GM12878 (cell line): ENCODE measurements at regions of chr13 and their contacts with region 1.

Region 1: GRCh38 chr13:40922437-40923040 is 96.6 kb downstream of the ELF1 start:
- DNase-seq: no peak
- ATAC-seq: no peak
- H3K4me3 ChIP-seq: no peak overlapping the region
- H3K27ac ChIP-seq: no peak overlapping the region
- H3K4me1 ChIP-seq: no peaks in the 10 kb centered on the region
- H3K27me3 ChIP-seq: no peaks in the 10 kb centered on the region
- CTCF ChIP-seq: no peak
- EP300 ChIP-seq: no peak
- POLR2A ChIP-seq: no peak
- RAD21 ChIP-seq: no peak

Region 2: GRCh38 chr13:40336228-40337221 is 586.0 kb before region 1 on chr13:
- CTCF ChIA-PET with region 1: no interaction called
- POLR2A ChIA-PET with region 1: no interaction called
- RAD21 ChIA-PET with region 1: no interaction called
- SMC1A ChIA-PET with region 1: no interaction called
- in situ Hi-C with region 1: no loop called
- intact Hi-C with region 1: no loop called
- DNase-seq: no peak
- ATAC-seq: no peak
- H3K4me3 ChIP-seq: no peak overlapping the region
- H3K27ac ChIP-seq: no peak overlapping the region
- H3K4me1 ChIP-seq: no peaks in the 10 kb centered on the region
- H3K27me3 ChIP-seq: no peaks in the 10 kb centered on the region
- CTCF ChIP-seq: no peak
- EP300 ChIP-seq: no peak
- POLR2A ChIP-seq: no peak
- RAD21 ChIP-seq: no peak

Region 3: DNA sequence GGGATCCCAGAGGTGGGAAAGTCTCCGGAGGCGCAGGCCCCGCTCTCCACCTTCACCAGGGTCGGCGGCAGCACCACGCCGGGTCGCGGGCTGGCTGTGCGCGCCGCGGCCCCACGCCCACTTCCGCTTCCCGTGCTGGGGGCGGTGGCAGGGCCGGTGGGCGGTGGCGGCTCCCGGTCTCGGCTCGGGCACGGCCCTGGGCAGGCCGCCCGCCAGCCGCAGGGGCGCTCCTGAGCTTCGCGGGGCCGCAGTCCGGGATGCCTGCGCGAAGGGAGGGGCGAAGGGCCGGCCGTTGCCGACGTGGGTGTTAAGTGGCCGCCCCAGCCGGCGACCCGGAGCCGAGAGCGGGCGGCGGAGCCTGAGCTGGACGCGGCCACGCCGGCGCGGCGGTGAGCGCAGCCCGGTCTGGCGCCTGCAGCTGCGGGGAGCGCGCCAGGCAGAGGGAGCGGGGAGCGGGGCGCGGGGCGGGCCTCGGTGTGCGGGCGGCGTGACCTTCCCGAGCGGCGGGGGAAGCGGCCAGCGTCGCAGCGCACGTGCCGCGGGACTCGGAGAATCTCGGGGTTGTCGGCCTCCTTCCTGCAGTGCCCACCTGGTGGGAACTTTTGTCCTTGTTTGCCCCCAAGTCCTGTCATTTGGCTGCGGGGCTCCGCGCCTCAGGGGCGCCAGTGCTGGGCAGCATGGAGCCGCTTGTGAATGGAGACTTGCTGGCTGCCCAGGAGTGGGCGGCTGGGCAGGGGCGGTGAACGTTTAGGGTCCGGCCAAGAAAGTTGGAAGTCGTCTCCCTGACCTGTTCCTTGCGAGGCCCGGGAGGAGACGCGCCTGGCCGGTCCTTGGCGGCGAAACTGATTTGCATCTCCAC is 133.0 kb before region 1 on chr13 and contains the start of gene SLC25A15:
- CTCF ChIA-PET with region 1: interaction called, 4 read pairs
- POLR2A ChIA-PET with region 1: no interaction called
- RAD21 ChIA-PET with region 1: interaction called, 4 read pairs
- SMC1A ChIA-PET with region 1: interaction called, 3 read pairs
- in situ Hi-C with region 1: no loop called
- intact Hi-C with region 1: loop called (anchors 5 kb)
- DNase-seq: no peak
- ATAC-seq: peak; percentile 94
- H3K4me3 ChIP-seq: peak within 1 kb of the TSS; percentile 83
- H3K27ac ChIP-seq: peak within 1 kb of the TSS; percentile 56
- H3K4me1 ChIP-seq: peaks cover 17% of the 10 kb centered on the region
- H3K27me3 ChIP-seq: no peaks in the 10 kb centered on the region
- CTCF ChIP-seq: peak in 2 of 3 experiments; percentile 33 to 47; a peak in 3 of 6 replicates
- EP300 ChIP-seq: 0 out of 4 replicates have a peak, but pooled peaks of 1 of the 2 experiments have one; percentile 23
- POLR2A ChIP-seq: peak; percentile 76
- RAD21 ChIP-seq: peak; percentile 42
- polyA plus RNA-seq, gene SLC25A15: 2.7 to 3.6 TPM

Region 4: DNA sequence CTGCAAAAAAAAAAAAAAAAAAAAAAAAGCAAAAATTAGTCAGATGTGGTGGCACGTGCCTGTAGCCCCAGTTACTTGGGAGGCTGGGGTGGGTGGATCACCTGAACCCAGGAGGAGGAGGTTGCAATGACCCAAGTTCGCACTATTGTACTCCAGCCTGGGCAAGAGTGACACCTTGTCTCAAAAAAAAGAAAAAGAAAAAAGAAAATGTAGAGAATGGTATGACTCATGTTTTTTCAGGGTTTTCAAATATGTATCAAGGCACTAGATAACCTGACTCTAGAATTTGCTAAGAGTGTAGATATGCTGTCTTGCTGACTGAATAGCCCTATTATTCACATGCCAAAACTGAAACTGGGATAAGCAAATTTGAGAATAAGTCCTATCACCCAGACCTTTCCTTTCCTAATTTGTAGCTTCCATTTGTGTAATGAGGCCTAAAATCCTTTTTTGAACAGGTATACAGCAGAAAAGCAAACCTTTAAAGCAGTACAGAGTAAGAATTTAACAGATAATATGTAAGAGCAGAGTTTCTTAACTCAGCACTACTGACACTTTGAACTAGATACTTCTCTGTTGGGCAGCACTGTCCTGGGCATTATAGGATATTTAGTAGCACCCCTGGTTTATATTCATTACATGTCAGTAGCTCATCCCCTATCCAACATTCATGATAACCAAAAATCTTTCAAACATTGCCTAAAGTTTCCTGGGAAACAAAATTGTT is 12.1 kb before region 1 on chr13:
- CTCF ChIA-PET with region 1: interaction called, 5 read pairs
- POLR2A ChIA-PET with region 1: no interaction called
- RAD21 ChIA-PET with region 1: no interaction called
- SMC1A ChIA-PET with region 1: interaction called, 22 read pairs
- in situ Hi-C with region 1: no loop called
- intact Hi-C with region 1: no loop called
- DNase-seq: peak; percentile 21
- ATAC-seq: peak; percentile 94
- H3K4me3 ChIP-seq: no peak overlapping the region
- H3K27ac ChIP-seq: no peak overlapping the region; the same call in 1 of the 2 replicates
- H3K4me1 ChIP-seq: peaks cover 5% of the 10 kb centered on the region; the same call in 1 of the 2 replicates
- H3K27me3 ChIP-seq: no peaks in the 10 kb centered on the region
- CTCF ChIP-seq: no peak
- EP300 ChIP-seq: peak in 1 of 2 experiments; percentile 54; a peak in 1 of 4 replicates
- POLR2A ChIP-seq: no peak
- RAD21 ChIP-seq: no peak

Region 5: GRCh38 chr13:40933508-40934204 is 11.1 kb after region 1 on chr13:
- CTCF ChIA-PET with region 1: interaction called, 8 read pairs
- POLR2A ChIA-PET with region 1: no interaction called
- RAD21 ChIA-PET with region 1: interaction called, 3 read pairs
- SMC1A ChIA-PET with region 1: interaction called, 14 read pairs
- in situ Hi-C with region 1: no loop called
- intact Hi-C with region 1: no loop called
- DNase-seq: peak; percentile 20
- ATAC-seq: peak; percentile 64
- H3K4me3 ChIP-seq: no peak overlapping the region
- H3K27ac ChIP-seq: peak overlapping the region; percentile 32
- H3K4me1 ChIP-seq: peaks cover 8% of the 10 kb centered on the region
- H3K27me3 ChIP-seq: no peaks in the 10 kb centered on the region
- CTCF ChIP-seq: no peak
- EP300 ChIP-seq: no peak
- POLR2A ChIP-seq: no peak
- RAD21 ChIP-seq: no peak